ENCODE measurements at regions of chr18 and their contacts with region 1.

Region 1: GRCh38 chr18:58180738-58181353 is 136.8 kb downstream of the NEDD4L start:
- DNase-seq: peak; percentile 69
- H3K4me3 Mint-ChIP-seq: no peak overlapping the region
- H3K27ac Mint-ChIP-seq: no peak overlapping the region
- H3K4me1 Mint-ChIP-seq: peaks cover 15% of the 10 kb centered on the region
- H3K27me3 Mint-ChIP-seq: no peaks in the 10 kb centered on the region
- CTCF ChIP-seq: peak; percentile 79

Region 2: DNA sequence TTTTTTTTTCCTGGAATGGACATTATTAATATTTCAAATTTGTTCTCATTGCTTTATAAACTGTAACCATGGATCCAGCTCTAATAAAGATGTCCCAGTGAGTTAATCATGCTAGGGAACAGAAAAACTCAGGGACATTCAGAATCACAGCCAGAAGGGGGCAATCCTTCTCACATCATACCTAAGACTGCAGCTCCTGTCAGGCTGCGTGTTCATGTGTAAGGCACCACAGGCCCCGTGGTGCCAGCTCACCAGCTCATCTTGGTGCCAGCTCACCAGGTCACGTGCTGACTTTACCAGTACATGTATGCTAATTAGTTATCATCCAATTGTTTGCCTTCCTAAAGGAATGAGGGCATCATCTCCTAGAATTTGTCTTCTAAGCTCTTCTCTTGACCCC is 221.6 kb before region 1 on chr18:
- CTCF ChIA-PET with region 1: no interaction called
- POLR2A ChIA-PET with region 1: no interaction called
- intact Hi-C with region 1: loop called (anchors 1 kb)
- DNase-seq: peak; percentile 84
- H3K4me3 Mint-ChIP-seq: no peak overlapping the region
- H3K27ac Mint-ChIP-seq: no peak overlapping the region
- H3K4me1 Mint-ChIP-seq: peaks cover 6% of the 10 kb centered on the region
- H3K27me3 Mint-ChIP-seq: no peaks in the 10 kb centered on the region
- CTCF ChIP-seq: peak; percentile 53

Region 3: GRCh38 chr18:58135701-58136331 is 45.0 kb before region 1 on chr18:
- CTCF ChIA-PET with region 1: interaction called, 16 read pairs
- POLR2A ChIA-PET with region 1: interaction called, 4 read pairs
- intact Hi-C with region 1: loop called (anchors 1 kb)
- DNase-seq: peak; percentile 85
- H3K4me3 Mint-ChIP-seq: no peak overlapping the region
- H3K27ac Mint-ChIP-seq: no peak overlapping the region
- H3K4me1 Mint-ChIP-seq: peaks cover 3% of the 10 kb centered on the region
- H3K27me3 Mint-ChIP-seq: no peaks in the 10 kb centered on the region
- CTCF ChIP-seq: peak; percentile 64

Region 4: GRCh38 chr18:58216071-58216478 is 35.2 kb after region 1 on chr18:
- CTCF ChIA-PET with region 1: interaction called, 19 read pairs
- POLR2A ChIA-PET with region 1: interaction called, 171 read pairs
- intact Hi-C with region 1: no loop called
- DNase-seq: peak; percentile 67
- H3K4me3 Mint-ChIP-seq: peak overlapping the region; percentile 52
- H3K27ac Mint-ChIP-seq: peak overlapping the region; percentile 33
- H3K4me1 Mint-ChIP-seq: peaks cover 48% of the 10 kb centered on the region
- H3K27me3 Mint-ChIP-seq: no peaks in the 10 kb centered on the region
- CTCF ChIP-seq: no peak

Region 5: DNA sequence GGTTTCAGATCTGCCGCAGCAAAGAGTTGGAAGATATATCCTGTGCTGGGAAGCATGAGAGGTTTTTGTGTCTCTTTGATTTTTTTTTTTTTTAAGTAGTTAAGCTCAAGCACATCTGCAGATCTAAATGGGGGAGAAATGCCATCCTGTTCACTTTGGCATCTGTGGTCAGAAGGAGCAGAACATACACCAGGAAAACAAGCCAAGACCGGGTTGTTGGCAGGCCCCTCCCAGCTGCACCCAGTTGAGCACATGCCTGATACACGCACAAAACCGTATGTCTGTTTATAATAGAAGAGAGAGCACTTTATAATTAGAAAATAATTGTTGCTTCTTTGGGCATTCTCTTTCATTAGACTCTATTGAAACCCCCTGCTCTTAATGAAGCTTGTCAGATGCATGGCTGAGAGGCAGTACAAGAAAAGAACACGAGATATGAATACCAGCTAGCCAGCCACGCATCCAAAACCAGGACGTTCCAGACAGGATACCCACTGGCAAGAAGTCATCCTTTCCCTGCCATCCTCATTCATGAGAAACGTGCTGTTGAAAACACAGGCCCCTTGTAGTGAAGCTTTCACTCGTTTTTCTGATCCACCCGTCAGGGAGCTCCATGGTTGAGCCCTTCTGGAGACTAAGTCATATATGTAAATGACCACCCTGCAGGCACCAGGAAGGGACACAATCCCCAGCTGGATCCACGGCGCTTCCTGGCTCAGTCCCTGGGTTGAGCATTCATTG is 295.8 kb after region 1 on chr18:
- CTCF ChIA-PET with region 1: no interaction called
- POLR2A ChIA-PET with region 1: no interaction called
- intact Hi-C with region 1: no loop called
- DNase-seq: no peak
- H3K4me3 Mint-ChIP-seq: no peak overlapping the region
- H3K27ac Mint-ChIP-seq: no peak overlapping the region
- H3K4me1 Mint-ChIP-seq: peaks cover 23% of the 10 kb centered on the region
- H3K27me3 Mint-ChIP-seq: no peaks in the 10 kb centered on the region
- CTCF ChIP-seq: no peak

Region 6: DNA sequence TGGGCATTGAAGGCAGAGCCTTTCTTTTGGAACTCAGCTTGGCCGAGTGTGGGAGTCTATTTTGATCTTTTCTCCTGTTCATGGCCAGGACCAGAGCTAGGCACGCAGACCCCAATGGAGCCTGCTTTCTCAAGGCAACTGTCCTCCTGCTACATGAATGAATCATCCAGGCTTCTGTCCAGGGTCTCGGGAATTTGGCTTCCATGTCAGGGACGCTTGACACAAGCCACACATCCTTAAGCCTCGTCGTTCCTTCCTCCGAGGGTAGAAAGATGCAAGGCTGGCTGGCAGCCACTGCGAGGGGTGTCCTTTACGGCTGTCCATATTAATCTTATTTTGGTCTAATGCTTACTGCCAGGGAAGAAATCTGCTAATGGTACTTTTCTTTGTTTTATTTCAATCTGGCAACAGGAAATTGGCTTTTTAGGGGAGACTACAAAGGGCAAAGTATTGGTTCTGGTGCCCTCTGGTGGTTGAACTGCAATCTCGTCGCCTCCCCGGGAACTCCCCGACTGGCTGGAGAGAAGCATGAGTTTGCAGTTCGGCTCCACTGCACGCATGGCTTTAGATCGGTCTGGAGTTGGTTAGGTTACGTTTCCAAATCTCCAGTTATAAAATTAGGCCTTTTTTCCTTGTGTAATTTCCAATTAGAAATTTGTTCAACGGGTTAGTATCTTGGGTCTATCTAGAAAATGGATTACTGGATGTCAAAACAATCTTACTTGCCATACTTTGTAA is 312.8 kb after region 1 on chr18:
- CTCF ChIA-PET with region 1: no interaction called
- POLR2A ChIA-PET with region 1: no interaction called
- intact Hi-C with region 1: loop called (anchors 10 kb)
- DNase-seq: peak; percentile 80
- H3K4me3 Mint-ChIP-seq: no peak overlapping the region
- H3K27ac Mint-ChIP-seq: no peak overlapping the region
- H3K4me1 Mint-ChIP-seq: no peaks in the 10 kb centered on the region
- H3K27me3 Mint-ChIP-seq: peaks cover 29% of the 10 kb centered on the region
- CTCF ChIP-seq: peak; percentile 78